K562 (cell line): ENCODE measurements at regions of chr15 and their contacts with region 1.

Region 1: GRCh38 chr15:89904519-89904918 is 8.2 kb downstream of the ARPIN start:
- DNase-seq: no peak
- ATAC-seq: no peak
- H3K4me3 ChIP-seq: no peak overlapping the region
- H3K27ac ChIP-seq: no peak overlapping the region
- H3K4me1 ChIP-seq: peaks cover 0 to 8% of the 10 kb centered on the region in 2 experiments; a peak in 1 of 5 replicates
- H3K27me3 ChIP-seq: peaks cover 0 to 12% of the 10 kb centered on the region in 2 experiments; a peak in 2 of 5 replicates
- CTCF ChIP-seq: no peak
- EP300 ChIP-seq: no peak
- POLR2A ChIP-seq: no peak
- RAD21 ChIP-seq: no peak

Region 2: GRCh38 chr15:89740137-89740536 is 164.4 kb before region 1 on chr15:
- CTCF ChIA-PET with region 1: no interaction called
- POLR2A ChIA-PET with region 1: no interaction called
- in situ Hi-C with region 1: no loop called
- intact Hi-C with region 1: no loop called
- DNase-seq: peak; percentile 77 to 81 (median 78)
- ATAC-seq: peak; percentile 95
- H3K4me3 ChIP-seq: no peak overlapping the region
- H3K27ac ChIP-seq: no peak overlapping the region
- H3K4me1 ChIP-seq: no peaks in the 10 kb centered on the region; a peak in 1 of 5 replicates
- H3K27me3 ChIP-seq: peaks cover 14 to 51% of the 10 kb centered on the region in 2 experiments; a peak in 3 of 5 replicates
- CTCF ChIP-seq: peak; percentile 86 to 96 (median 91)
- EP300 ChIP-seq: no peak
- POLR2A ChIP-seq: no peak
- RAD21 ChIP-seq: peak; percentile 83 to 91

Region 3: DNA sequence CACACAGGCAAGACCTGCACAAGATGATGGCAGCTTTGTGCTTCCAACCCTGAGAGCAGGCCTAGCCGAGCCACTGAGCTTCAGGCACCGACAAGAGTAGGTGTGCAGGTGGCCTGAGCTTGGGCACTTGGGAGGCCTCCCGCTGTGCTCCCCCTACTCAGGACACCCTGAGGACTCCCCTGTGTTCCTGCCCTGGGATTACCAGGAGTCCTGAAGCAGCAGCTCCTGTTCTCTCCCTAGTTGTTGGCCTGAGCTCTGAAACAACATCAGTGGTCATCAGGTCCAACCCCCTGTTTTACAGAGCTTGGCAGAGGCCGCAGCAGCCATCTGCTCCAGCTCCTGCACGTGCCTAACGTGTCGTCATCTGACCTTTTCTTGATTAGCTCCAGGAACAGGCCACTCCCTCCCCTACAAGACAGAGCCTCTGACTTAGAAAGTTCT is 136.4 kb before region 1 on chr15:
- CTCF ChIA-PET with region 1: no interaction called
- POLR2A ChIA-PET with region 1: no interaction called
- in situ Hi-C with region 1: no loop called
- intact Hi-C with region 1: no loop called
- DNase-seq: peak in 1 of 4 experiments; percentile 33
- ATAC-seq: peak; percentile 55
- H3K4me3 ChIP-seq: no peak overlapping the region
- H3K27ac ChIP-seq: no peak overlapping the region
- H3K4me1 ChIP-seq: peaks cover 13 to 25% of the 10 kb centered on the region in 2 experiments; a peak in 4 of 5 replicates
- H3K27me3 ChIP-seq: no peaks in the 10 kb centered on the region
- CTCF ChIP-seq: no peak
- EP300 ChIP-seq: no peak
- POLR2A ChIP-seq: no peak
- RAD21 ChIP-seq: no peak

Region 4: GRCh38 chr15:89971592-89971997 is 67.1 kb after region 1 on chr15:
- CTCF ChIA-PET with region 1: no interaction called
- POLR2A ChIA-PET with region 1: no interaction called
- in situ Hi-C with region 1: loop called (anchors 5 kb)
- intact Hi-C with region 1: no loop called
- DNase-seq: peak; percentile 50 to 78 (median 65)
- ATAC-seq: peak; percentile 100
- H3K4me3 ChIP-seq: no peak overlapping the region
- H3K27ac ChIP-seq: no peak overlapping the region
- H3K4me1 ChIP-seq: no peaks in the 10 kb centered on the region
- H3K27me3 ChIP-seq: no peaks in the 10 kb centered on the region
- CTCF ChIP-seq: peak; percentile 90 to 99 (median 98)
- EP300 ChIP-seq: no peak
- POLR2A ChIP-seq: no peak
- RAD21 ChIP-seq: peak; percentile 54 to 76

Region 5: GRCh38 chr15:90062023-90062442 is 157.5 kb after region 1 on chr15:
- CTCF ChIA-PET with region 1: no interaction called
- POLR2A ChIA-PET with region 1: no interaction called
- in situ Hi-C with region 1: no loop called
- intact Hi-C with region 1: no loop called
- DNase-seq: peak; percentile 79 to 93 (median 86)
- ATAC-seq: peak; percentile 88
- H3K4me3 ChIP-seq: no peak overlapping the region
- H3K27ac ChIP-seq: peak overlapping the region; percentile 85
- H3K4me1 ChIP-seq: peaks cover 52 to 56% of the 10 kb centered on the region in 2 experiments
- H3K27me3 ChIP-seq: no peaks in the 10 kb centered on the region
- CTCF ChIP-seq: no peak
- EP300 ChIP-seq: peak; percentile 45; the same call in 1 of the 2 replicates
- POLR2A ChIP-seq: peak; percentile 37; the same call in 1 of the 2 replicates
- RAD21 ChIP-seq: no peak